H1 (cell line): ENCODE measurements at regions of chr20 and their contacts with region 1.

Region 1: DNA sequence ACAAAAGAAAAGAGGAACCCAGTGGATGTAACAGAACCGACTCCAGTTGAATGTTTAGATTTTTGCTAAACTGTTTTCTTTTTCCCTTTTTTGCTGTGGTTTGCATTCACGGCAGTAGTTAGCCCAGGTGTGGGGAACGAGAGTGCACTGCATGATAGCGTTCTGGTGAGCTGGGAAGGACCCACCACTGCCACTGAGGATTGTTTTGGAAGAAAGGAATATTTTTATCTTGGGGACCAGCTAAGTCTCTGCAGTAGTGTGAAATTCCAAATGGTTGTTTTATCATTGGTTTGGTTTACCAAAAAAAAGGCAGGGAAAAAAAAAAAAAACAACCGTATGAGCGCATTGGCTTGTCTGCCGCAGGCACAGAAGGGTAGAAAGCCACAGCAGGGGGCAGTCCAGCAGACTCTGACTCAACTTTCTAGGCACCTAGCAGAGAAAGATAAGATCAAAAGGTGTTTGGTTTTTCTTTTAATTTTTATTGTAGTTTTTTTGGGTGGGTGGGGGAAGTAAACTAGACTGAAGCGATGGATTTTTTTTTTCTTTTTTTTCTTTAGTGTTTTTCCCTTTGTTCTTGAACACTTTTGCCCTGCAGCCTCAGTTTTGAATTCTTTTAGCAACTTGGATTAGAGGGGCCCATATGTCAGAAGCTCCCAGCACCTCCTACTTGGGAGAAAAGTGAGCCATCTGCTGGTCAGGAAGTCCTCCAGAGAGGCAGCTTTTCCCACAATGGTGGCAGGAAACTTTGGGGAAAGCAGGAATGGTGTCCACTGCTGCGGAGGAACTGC is 13.5 kb upstream of the RAB5IF start:
- DNase-seq: no peak
- H3K4me3 ChIP-seq: no peak overlapping the region
- H3K27ac ChIP-seq: no peak overlapping the region
- H3K4me1 ChIP-seq: peaks cover 0 to 8% (median 2%) of the 10 kb centered on the region in 4 experiments; a peak in 5 of 7 replicates
- H3K27me3 ChIP-seq: no peaks in the 10 kb centered on the region
- CTCF ChIP-seq: peak; percentile 49 to 65 (median 58)
- EP300 ChIP-seq: no peak
- POLR2A ChIP-seq: no peak
- RAD21 ChIP-seq: peak; percentile 51 to 65

Region 2: DNA sequence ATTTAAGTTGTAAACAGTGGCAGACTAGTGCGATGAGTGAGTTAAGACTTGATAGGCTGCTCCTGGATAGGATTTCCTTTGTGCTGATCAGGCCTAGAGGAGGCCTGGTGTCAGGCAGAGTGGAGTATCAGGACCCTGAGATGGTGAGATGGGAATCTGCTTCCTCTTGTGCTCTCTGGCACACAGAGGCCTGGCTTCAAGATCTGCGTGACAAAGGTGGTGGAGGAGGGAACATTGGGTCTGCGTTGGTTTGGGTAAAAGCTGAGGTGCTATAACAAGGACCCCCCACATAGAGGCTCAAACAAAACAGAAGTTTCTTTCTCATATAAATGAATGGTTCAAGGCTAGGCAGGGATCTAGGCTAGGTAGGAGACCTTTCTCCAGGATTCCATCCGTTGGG is 658.0 kb before region 1 on chr20:
- CTCF ChIA-PET with region 1: no interaction called
- POLR2A ChIA-PET with region 1: no interaction called
- DNase-seq: peak in 1 of 2 experiments; percentile 29
- H3K4me3 ChIP-seq: peak overlapping the region in 1 of 4 experiments; percentile 27; a peak in 1 of 8 replicates
- H3K27ac ChIP-seq: peak overlapping the region; percentile 30
- H3K4me1 ChIP-seq: peaks cover 6 to 12% (median 10%) of the 10 kb centered on the region in 4 experiments; a peak in 5 of 7 replicates
- H3K27me3 ChIP-seq: no peaks in the 10 kb centered on the region; a peak in 1 of 7 replicates
- CTCF ChIP-seq: no peak
- EP300 ChIP-seq: no peak
- POLR2A ChIP-seq: peak in 1 of 2 experiments; percentile 25; a peak in 1 of 3 replicates
- RAD21 ChIP-seq: no peak

Region 3: GRCh38 chr20:36562724-36563123 is 29.3 kb before region 1 on chr20:
- CTCF ChIA-PET with region 1: interaction called, 202 read pairs
- POLR2A ChIA-PET with region 1: interaction called, 388 read pairs
- DNase-seq: no peak
- H3K4me3 ChIP-seq: no peak overlapping the region; a peak in 2 of 8 replicates
- H3K27ac ChIP-seq: no peak overlapping the region
- H3K4me1 ChIP-seq: peaks cover 6 to 9% (median 8%) of the 10 kb centered on the region in 4 experiments
- H3K27me3 ChIP-seq: no peaks in the 10 kb centered on the region
- CTCF ChIP-seq: no peak
- EP300 ChIP-seq: no peak
- POLR2A ChIP-seq: no peak
- RAD21 ChIP-seq: no peak

Region 4: GRCh38 chr20:36645998-36646397 is 54.0 kb after region 1 on chr20 and contains the start of gene SLA2:
- CTCF ChIA-PET with region 1: no interaction called
- POLR2A ChIA-PET with region 1: no interaction called
- DNase-seq: no peak
- H3K4me3 ChIP-seq: no peak within 1 kb of the TSS
- H3K27ac ChIP-seq: no peak within 1 kb of the TSS
- H3K4me1 ChIP-seq: peaks cover 1 to 13% (median 6%) of the 10 kb centered on the region in 4 experiments; a peak in 4 of 7 replicates
- H3K27me3 ChIP-seq: no peaks in the 10 kb centered on the region
- CTCF ChIP-seq: no peak
- EP300 ChIP-seq: no peak
- POLR2A ChIP-seq: no peak
- RAD21 ChIP-seq: no peak
- total RNA-seq, gene SLA2: 0.19 TPM in 1 of 2 replicates, not detected in the other

Region 5: GRCh38 chr20:36688630-36689029 is 96.6 kb after region 1 on chr20:
- CTCF ChIA-PET with region 1: no interaction called
- POLR2A ChIA-PET with region 1: no interaction called
- DNase-seq: no peak
- H3K4me3 ChIP-seq: no peak overlapping the region
- H3K27ac ChIP-seq: no peak overlapping the region
- H3K4me1 ChIP-seq: no peaks in the 10 kb centered on the region
- H3K27me3 ChIP-seq: no peaks in the 10 kb centered on the region
- CTCF ChIP-seq: no peak
- EP300 ChIP-seq: no peak
- POLR2A ChIP-seq: no peak
- RAD21 ChIP-seq: no peak